Sciatic nerve (tissue), 2 donors: ENCODE measurements at regions of chr5 and their contacts with region 1.

Region 1: GRCh38 chr5:16275458-16275857 is 95.9 kb upstream of the MARCHF11 start:
- DNase-seq: no peak
- ATAC-seq: no peak

Region 2: DNA sequence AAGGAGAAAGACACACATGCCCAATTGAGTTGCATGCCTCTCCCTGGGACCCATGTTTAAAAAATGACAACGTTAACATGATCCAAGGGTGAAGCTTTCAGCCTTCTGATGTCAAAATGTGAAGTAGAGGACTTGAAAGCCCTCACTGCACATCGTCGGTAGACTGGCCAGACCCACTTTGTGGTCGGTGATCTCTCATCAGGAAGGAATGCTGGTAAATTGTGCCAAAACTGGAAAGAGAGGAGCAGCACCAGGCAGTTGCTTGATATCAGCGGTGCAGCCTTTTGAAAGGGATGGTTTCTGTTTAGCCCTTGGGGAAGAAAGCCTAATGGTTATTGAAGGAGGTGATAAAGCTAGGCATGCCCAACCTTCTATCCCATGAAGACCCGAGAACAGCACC is 29.4 kb after region 1 on chr5:
- intact Hi-C with region 1: loop called (anchors 2 kb)
- DNase-seq: no peak
- ATAC-seq: no peak